HEK293 (cell line): ENCODE measurements at regions of chr6 and their contacts with region 1.

Region 1: GRCh38 chr6:31068669-31069340 is 43.6 kb downstream of the C6orf15 start:
- H3K4me3 ChIP-seq: no peak overlapping the region
- H3K27ac ChIP-seq: no peak overlapping the region
- H3K4me1 ChIP-seq: peaks cover 17% of the 10 kb centered on the region
- CTCF ChIP-seq: peak; percentile 75

Region 2: DNA sequence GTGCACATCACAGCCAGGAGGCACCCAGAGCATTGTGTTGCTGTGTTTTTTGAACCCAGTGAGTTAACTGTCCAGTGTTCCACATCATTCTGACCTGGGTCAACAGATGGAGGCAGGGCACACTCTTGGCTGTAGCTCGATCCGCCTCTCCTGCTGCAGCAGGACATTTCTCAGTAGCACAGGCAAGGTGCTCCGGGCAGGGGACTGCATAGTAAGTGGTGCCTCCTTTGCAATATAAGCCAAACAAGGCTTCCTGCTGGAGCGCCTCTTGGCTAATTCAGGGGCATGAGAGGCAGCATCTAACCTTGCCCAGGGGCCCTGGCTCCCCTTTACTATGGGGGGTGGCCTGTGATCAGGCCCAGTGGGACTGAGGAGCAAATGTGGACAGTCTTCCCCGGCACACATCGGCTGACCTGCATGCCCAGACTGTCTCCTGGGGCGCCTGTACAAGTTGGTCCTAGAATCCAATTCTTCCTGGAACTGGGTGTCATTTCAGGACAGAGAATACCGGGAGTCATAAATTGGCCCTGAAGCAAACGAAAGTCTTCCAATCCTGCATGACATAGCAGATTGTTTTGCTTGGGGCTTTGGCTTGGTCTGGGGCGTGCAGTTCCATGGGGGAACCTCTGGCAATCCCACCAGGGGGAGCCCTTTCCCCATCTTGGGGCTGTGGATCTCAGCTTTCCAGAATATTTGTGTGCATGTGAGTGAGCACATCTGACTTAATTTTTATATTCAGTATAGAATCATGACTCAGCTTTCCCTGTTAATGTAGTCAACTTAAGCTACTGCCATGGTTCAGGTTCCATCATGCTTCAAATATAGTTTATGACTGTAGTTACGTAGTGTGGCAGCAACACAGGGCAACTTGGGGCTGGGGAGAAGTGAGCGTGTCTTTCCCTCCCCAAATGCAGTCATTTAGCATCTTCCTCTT is 240.5 kb before region 1 on chr6:
- CTCF ChIA-PET with region 1: interaction called, 40 read pairs
- POLR2A ChIA-PET with region 1: no interaction called
- H3K4me3 ChIP-seq: no peak overlapping the region
- H3K27ac ChIP-seq: no peak overlapping the region
- H3K4me1 ChIP-seq: no peaks in the 10 kb centered on the region
- CTCF ChIP-seq: peak; percentile 79

Region 3: GRCh38 chr6:30844091-30844535 is 224.7 kb before region 1 on chr6:
- CTCF ChIA-PET with region 1: interaction called, 16 read pairs
- POLR2A ChIA-PET with region 1: no interaction called
- H3K4me3 ChIP-seq: no peak overlapping the region
- H3K27ac ChIP-seq: no peak overlapping the region
- H3K4me1 ChIP-seq: peaks cover 14% of the 10 kb centered on the region
- CTCF ChIP-seq: peak; percentile 42; the same call in 1 of the 2 replicates

Region 4: GRCh38 chr6:30942338-30943060 is 126.3 kb before region 1 on chr6:
- CTCF ChIA-PET with region 1: interaction called, 12 read pairs
- POLR2A ChIA-PET with region 1: no interaction called
- H3K4me3 ChIP-seq: no peak overlapping the region
- H3K27ac ChIP-seq: no peak overlapping the region
- H3K4me1 ChIP-seq: no peaks in the 10 kb centered on the region; the same call in 1 of the 2 replicates
- CTCF ChIP-seq: peak; percentile 63; the same call in 1 of the 2 replicates

Region 5: DNA sequence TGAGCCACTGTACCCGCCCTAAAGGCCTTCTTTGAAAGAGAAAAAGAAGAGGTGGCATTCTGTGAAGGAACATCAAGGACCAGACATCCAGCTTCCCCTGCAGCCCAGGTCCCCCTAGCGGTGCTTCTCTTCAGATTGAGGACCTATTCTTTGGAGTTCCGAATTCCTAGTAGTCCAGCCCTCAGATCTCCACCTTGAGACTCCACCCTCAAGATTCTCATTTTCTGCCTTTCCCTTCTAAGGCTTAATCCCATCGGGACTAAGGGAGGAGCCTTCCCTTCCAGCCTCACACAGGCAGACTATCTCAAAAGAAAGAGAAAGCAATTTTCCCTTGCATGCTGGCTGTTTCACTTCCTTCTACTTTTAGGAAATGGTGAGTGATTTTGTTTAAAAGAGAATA is 26.0 kb before region 1 on chr6:
- CTCF ChIA-PET with region 1: interaction called, 18 read pairs
- POLR2A ChIA-PET with region 1: no interaction called
- H3K4me3 ChIP-seq: no peak overlapping the region
- H3K27ac ChIP-seq: no peak overlapping the region
- H3K4me1 ChIP-seq: no peaks in the 10 kb centered on the region
- CTCF ChIP-seq: no peak

Region 6: GRCh38 chr6:31049518-31049917 is 19.3 kb before region 1 on chr6:
- CTCF ChIA-PET with region 1: interaction called, 15 read pairs
- POLR2A ChIA-PET with region 1: no interaction called
- H3K4me3 ChIP-seq: no peak overlapping the region
- H3K27ac ChIP-seq: no peak overlapping the region
- H3K4me1 ChIP-seq: no peaks in the 10 kb centered on the region
- CTCF ChIP-seq: no peak

Region 7: GRCh38 chr6:31058128-31058894 is 10.5 kb before region 1 on chr6:
- CTCF ChIA-PET with region 1: interaction called, 34 read pairs
- POLR2A ChIA-PET with region 1: no interaction called
- H3K4me3 ChIP-seq: no peak overlapping the region
- H3K27ac ChIP-seq: no peak overlapping the region
- H3K4me1 ChIP-seq: no peaks in the 10 kb centered on the region
- CTCF ChIP-seq: peak; percentile 47; the same call in 1 of the 2 replicates